Activated CD8-positive, alpha-beta T cell treated with anti-CD3 and anti-CD28 coated beads, Interleukin-2, amount 10 ng/mL, durations not matched to agents 7 days and 5 days (primary cell): ENCODE measurements at regions of chr1 and their contacts with region 1.

Region 1: DNA sequence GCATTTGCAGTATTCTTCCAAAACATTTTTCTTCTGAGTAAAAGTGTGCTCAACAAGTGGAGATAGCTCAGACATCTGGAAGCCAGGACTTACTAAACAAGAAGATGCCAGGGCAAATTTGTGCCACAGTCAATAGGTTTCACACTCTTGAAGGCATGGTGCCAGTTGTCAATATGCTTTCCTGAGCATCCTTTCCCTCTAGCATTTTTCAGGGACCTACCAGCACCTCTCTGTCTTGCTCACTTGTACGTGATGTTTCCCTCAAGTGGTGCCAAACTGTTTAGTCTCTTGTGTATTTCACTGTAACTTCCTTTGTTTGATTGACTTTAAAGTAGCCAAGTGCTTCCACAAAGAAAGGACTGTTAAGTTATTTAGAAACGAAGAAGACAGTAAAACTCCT is 194.0 kb upstream of the SGIP1 start:
- DNase-seq: no peak
- ATAC-seq: no peak
- H3K4me3 Mint-ChIP-seq: peak overlapping the region; percentile 61
- H3K27ac Mint-ChIP-seq: peak overlapping the region; percentile 79
- H3K4me1 Mint-ChIP-seq: peaks cover 80% of the 10 kb centered on the region
- H3K27me3 Mint-ChIP-seq: no peaks in the 10 kb centered on the region

Region 2: DNA sequence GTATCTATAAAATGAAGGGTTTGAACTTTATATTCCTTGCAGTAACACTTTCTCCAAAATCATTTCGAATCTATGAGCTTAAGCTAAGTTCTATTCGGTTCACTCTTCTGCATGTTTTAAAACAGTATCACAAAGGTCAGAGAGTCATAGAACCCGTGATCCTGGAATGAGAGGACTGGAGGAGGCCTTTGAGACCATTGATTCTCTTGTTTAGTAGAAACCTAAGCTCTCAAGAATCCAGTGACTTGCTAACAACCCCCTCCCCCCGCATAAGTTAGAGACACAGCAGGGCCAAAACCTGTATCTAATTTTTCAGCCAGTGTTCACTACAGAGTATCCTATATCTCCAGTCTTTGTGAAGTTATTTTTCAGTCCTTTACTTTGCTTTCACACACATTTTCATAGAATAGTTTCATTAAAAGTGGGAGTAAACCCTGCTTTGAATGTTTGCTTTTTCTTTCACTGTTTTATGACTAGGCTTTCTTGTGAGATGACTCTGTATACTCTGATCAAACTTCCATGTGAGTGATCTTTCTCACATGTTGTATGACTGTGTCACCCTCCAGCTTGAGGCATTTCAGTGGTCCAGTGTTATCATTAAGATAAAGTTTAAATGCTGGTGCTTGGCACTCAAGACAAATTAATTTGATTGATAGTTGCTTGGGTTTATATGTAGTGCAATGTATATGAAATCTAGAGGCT is 81.4 kb before region 1 on chr1:
- CTCF ChIA-PET with region 1: interaction called, 14 read pairs
- POLR2A ChIA-PET with region 1: interaction called, 3 read pairs
- DNase-seq: no peak
- ATAC-seq: no peak
- H3K4me3 Mint-ChIP-seq: no peak overlapping the region
- H3K27ac Mint-ChIP-seq: no peak overlapping the region
- H3K4me1 Mint-ChIP-seq: peaks cover 52% of the 10 kb centered on the region
- H3K27me3 Mint-ChIP-seq: no peaks in the 10 kb centered on the region

Region 3: DNA sequence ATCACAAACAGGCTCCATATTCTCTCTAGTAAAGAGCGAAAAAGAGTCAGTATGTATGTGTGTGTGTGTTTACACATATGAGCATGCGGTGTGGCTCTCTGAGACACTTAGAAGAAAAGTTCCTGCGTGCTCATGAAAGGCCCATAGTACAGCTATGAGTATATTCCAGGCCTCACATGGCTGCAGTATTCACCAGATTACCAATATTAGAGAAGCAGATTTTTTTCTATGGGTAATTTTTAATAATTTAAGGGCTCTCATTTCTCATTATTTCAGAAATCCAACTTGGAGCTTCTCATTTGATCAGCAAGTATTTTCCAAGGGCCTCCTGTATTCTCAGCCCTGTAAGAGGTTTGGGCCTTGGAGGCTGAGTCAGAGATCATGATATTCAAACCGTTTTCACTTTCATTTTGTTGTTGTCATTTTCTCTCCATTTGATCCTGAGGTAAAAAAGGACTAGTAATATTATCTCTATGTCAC is 38.9 kb before region 1 on chr1:
- CTCF ChIA-PET with region 1: interaction called, 11 read pairs
- POLR2A ChIA-PET with region 1: interaction called, 6 read pairs
- DNase-seq: peak; percentile 49
- ATAC-seq: peak; percentile 79
- H3K4me3 Mint-ChIP-seq: peak overlapping the region; percentile 77
- H3K27ac Mint-ChIP-seq: peak overlapping the region; percentile 88
- H3K4me1 Mint-ChIP-seq: peaks cover 41% of the 10 kb centered on the region
- H3K27me3 Mint-ChIP-seq: no peaks in the 10 kb centered on the region

Region 4: DNA sequence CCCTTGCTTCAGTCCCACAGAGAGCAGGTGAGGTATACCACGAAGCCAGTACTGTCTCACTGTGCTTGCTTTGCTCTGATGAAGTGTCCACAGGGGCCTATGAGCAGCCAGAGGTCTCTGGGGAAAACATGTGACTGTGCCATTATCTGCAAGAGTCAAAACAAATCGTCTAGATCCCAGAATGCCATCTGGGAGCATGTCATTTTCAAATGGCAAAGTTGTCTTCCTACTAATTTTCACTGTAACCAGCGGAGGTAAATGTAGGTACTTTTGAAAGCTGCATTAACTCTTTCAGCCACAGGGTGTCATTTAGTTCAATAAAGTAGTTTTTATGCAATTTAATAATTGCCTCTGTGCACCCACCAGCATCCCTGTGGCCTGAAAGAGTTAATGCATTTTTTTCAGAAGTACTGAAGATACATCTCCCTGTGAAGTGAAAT is 20.4 kb after region 1 on chr1:
- CTCF ChIA-PET with region 1: interaction called, 23 read pairs
- POLR2A ChIA-PET with region 1: interaction called, 5 read pairs
- DNase-seq: no peak
- ATAC-seq: no peak
- H3K4me3 Mint-ChIP-seq: no peak overlapping the region
- H3K27ac Mint-ChIP-seq: no peak overlapping the region
- H3K4me1 Mint-ChIP-seq: peaks cover 62% of the 10 kb centered on the region
- H3K27me3 Mint-ChIP-seq: no peaks in the 10 kb centered on the region